PC-3 (cell line): ENCODE measurements at regions of chr1 and their contacts with region 1.

Region 1: GRCh38 chr1:237672748-237673147 is 218.0 kb downstream of the ZP4 start:
- DNase-seq: peak; percentile 21
- ATAC-seq: peak; percentile 70
- H3K4me3 ChIP-seq: no peak overlapping the region
- H3K27ac ChIP-seq: no peak overlapping the region
- H3K4me1 ChIP-seq: no peaks in the 10 kb centered on the region
- H3K27me3 ChIP-seq: no peaks in the 10 kb centered on the region
- CTCF ChIP-seq: peak; percentile 48; the same call in 1 of the 2 replicates

Region 2: DNA sequence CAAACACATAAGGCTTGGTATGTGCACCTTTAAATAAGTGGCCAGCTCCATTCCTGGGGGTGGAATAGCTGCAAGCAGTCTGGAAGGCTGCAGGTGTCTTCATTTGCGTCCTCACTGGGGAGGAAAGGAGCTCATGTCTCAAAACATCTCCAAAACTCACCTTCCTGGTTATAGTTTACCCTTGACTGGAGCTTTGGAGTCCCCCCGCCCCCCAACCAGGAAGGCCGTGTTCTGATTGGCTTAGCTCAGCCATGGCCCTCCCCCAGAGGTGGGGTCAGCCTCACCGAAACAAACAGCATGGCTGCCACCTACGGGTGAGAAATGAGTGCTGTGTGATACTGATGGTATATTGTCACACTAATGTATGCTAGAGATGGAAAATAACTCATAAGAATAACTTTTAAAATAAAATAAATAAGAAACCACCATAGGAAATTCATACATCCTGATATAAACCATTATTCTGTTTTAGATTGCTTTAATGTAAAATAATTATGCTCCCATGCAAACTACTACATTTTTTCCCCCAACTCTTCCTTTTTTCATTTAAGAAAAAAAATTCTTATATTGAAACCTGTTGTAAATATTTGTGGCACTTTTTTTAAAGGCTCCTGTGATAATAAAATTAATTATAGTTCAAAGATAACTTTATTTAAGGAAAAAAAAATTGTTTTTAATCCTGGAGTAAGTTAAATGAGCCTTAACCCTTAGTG is 127.2 kb after region 1 on chr1:
- CTCF ChIA-PET with region 1: interaction called, 3 read pairs
- POLR2A ChIA-PET with region 1: no interaction called
- intact Hi-C with region 1: loop called (anchors 2 kb)
- DNase-seq: peak; percentile 78
- ATAC-seq: peak; percentile 100
- H3K4me3 ChIP-seq: no peak overlapping the region
- H3K27ac ChIP-seq: no peak overlapping the region
- H3K4me1 ChIP-seq: no peaks in the 10 kb centered on the region
- H3K27me3 ChIP-seq: no peaks in the 10 kb centered on the region
- CTCF ChIP-seq: peak; percentile 64